Activated CD4-positive, alpha-beta memory T cell treated with anti-CD3 and anti-CD28 coated beads, Interleukin-2, amount 10 ng/mL, durations not matched to agents 7 days and 5 days (primary cell): ENCODE measurements at regions of chr15 and their contacts with region 1.

Region 1: GRCh38 chr15:90325726-90326125 is 26.4 kb upstream of the ZNF774 start:
- DNase-seq: no peak
- H3K4me3 Mint-ChIP-seq: no peak overlapping the region
- H3K27ac Mint-ChIP-seq: no peak overlapping the region
- H3K4me1 Mint-ChIP-seq: peaks cover 2% of the 10 kb centered on the region
- H3K27me3 Mint-ChIP-seq: peaks cover 2% of the 10 kb centered on the region

Region 2: GRCh38 chr15:90154861-90155626 is 170.7 kb before region 1 on chr15:
- CTCF ChIA-PET with region 1: no interaction called
- POLR2A ChIA-PET with region 1: no interaction called
- DNase-seq: no peak
- H3K4me3 Mint-ChIP-seq: no peak overlapping the region
- H3K27ac Mint-ChIP-seq: no peak overlapping the region
- H3K4me1 Mint-ChIP-seq: peaks cover 25% of the 10 kb centered on the region
- H3K27me3 Mint-ChIP-seq: no peaks in the 10 kb centered on the region

Region 3: GRCh38 chr15:90482124-90483011 is 156.6 kb after region 1 on chr15:
- CTCF ChIA-PET with region 1: interaction called, 107 read pairs
- POLR2A ChIA-PET with region 1: interaction called, 9 read pairs
- DNase-seq: peak; percentile 53
- H3K4me3 Mint-ChIP-seq: no peak overlapping the region
- H3K27ac Mint-ChIP-seq: peak overlapping the region; percentile 23
- H3K4me1 Mint-ChIP-seq: peaks cover 49% of the 10 kb centered on the region
- H3K27me3 Mint-ChIP-seq: no peaks in the 10 kb centered on the region